ENCODE measurements at regions of chr6 and their contacts with region 1.

Region 1: DNA sequence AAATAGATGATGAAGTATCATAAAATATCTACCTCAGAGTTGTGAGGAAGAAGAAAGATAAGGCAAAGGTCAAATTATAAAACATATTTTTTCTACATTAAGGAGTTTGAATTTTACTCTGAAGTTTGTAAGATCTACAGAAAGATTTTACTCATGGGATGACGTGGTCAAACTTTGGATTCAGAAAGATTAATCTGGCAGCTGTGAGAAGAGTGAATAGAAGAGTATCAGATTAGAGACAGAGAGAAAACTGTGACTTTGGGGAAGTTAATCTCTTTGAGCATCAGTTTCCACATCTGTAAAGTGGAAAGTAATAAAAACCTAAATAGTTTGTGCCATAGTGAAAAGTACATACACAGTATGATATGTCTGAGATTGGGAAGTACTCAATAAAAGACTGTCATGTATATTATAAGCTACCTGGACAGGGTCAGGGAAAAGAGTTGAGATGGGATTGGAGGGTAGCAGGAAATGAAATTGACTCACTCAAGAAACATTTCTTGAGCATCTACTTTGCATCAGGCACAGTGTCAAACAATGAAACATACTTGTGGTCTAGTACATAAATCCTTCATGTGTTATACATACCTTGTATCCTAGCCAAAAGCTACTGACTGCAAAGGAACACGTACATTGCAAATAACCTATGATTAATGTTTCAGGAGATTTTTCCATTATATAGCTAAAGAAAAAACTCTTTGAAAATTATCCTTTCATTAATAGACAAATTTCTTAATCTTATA is 222.1 kb downstream of the TMEM200A start:
- DNase-seq: no peak
- H3K4me3 ChIP-seq: no peak overlapping the region
- H3K27ac ChIP-seq: no peak overlapping the region
- H3K4me1 ChIP-seq: no peaks in the 10 kb centered on the region
- H3K27me3 ChIP-seq: no peaks in the 10 kb centered on the region
- CTCF ChIP-seq: no peak
- EP300 ChIP-seq: no peak
- POLR2A ChIP-seq: no peak

Region 2: DNA sequence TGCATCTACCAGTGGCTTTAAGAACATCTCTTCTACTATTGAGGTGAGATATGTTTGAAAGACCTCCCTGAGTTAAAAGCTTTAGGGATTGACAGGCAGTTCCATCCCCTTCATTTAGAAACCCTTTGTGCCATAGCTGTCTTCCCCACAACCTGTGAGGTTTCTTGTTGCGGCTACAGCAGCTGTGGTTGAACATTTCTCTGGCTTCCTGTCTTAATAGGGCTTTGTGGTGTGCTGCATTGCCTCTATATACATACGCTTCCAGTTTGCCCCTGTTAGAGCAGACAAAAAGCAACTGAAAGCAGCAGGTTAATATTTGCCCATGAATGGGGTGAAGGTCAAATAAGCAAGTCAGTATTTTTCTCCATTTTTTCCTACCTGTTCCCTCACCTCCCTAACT is 12.0 kb before region 1 on chr6:
- intact Hi-C with region 1: loop called in 1 of 4 experiments (anchors 1 kb)
- DNase-seq: no peak
- H3K4me3 ChIP-seq: no peak overlapping the region
- H3K27ac ChIP-seq: no peak overlapping the region
- H3K4me1 ChIP-seq: no peaks in the 10 kb centered on the region
- H3K27me3 ChIP-seq: no peaks in the 10 kb centered on the region
- CTCF ChIP-seq: no peak
- EP300 ChIP-seq: no peak
- POLR2A ChIP-seq: no peak

Region 3: GRCh38 chr6:131125431-131125830 is 537.5 kb after region 1 on chr6:
- intact Hi-C with region 1: no loop called
- DNase-seq: no peak
- H3K4me3 ChIP-seq: no peak overlapping the region
- H3K27ac ChIP-seq: no peak overlapping the region
- H3K4me1 ChIP-seq: no peaks in the 10 kb centered on the region
- H3K27me3 ChIP-seq: no peaks in the 10 kb centered on the region
- CTCF ChIP-seq: no peak
- EP300 ChIP-seq: no peak
- POLR2A ChIP-seq: no peak